ENCODE measurements at regions of chr1 and their contacts with region 1.

Region 1: DNA sequence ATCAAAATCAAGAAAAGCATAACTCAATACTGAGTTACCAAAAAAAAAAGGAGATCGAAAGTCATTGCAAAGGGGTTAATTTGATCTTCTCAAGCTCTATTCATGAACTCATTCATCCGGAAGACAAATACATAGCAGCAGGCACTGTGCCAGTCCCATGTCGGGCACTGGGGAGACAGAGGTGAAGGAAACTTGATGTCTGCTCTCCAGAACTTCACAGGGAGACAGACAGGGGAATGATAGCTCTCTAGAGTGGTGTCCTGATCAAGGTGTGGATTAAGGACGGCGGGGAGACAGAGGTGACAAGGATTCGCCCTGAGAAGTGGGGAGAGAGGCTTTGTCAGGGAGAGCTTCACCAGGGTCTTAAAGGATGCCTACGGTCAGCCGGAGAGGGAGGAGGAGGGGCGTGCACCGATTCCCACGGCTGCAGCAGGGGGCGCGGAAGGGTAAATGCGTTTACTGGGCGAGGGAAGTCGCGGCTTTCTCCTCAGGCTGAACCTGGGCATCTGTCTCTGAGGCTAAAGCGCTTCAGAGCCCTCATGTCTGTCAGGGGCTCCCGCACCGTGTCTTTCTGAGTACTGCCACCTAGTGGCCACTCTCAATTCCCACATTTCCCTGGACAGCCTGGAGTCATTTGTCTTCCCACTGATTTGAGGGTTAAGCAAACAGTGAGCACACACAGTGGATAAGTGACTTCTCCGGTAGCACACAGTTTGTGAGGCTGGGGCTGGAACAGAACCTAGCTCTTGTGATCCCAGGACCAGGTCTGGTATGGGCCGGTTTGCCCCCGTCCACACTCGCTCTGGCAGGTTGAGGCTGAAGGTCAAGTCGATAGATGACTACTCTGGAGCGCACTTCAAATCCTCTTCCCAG is 152.8 kb downstream of the TENT5C start:
- DNase-seq: peak; percentile 60 to 87 (median 71)
- ATAC-seq: peak; percentile 92
- H3K4me3 ChIP-seq: no peak overlapping the region
- H3K4me1 ChIP-seq: peaks cover 3% of the 10 kb centered on the region
- CTCF ChIP-seq: peak; percentile 80

Region 2: GRCh38 chr1:117512743-117513321 is 245.8 kb before region 1 on chr1:
- intact Hi-C with region 1: loop called in 1 of 2 experiments (anchors 5 kb)
- DNase-seq: no peak
- ATAC-seq: peak; percentile 40
- H3K4me3 ChIP-seq: no peak overlapping the region
- H3K4me1 ChIP-seq: no peaks in the 10 kb centered on the region
- CTCF ChIP-seq: no peak

Region 3: GRCh38 chr1:117534995-117535467 is 223.6 kb before region 1 on chr1:
- intact Hi-C with region 1: loop called (anchors 5 to 10 kb)
- DNase-seq: peak in 2 of 3 donors; percentile 44 to 49
- ATAC-seq: peak; percentile 83
- H3K4me3 ChIP-seq: no peak overlapping the region
- H3K4me1 ChIP-seq: no peaks in the 10 kb centered on the region
- CTCF ChIP-seq: peak; percentile 55

Region 4: DNA sequence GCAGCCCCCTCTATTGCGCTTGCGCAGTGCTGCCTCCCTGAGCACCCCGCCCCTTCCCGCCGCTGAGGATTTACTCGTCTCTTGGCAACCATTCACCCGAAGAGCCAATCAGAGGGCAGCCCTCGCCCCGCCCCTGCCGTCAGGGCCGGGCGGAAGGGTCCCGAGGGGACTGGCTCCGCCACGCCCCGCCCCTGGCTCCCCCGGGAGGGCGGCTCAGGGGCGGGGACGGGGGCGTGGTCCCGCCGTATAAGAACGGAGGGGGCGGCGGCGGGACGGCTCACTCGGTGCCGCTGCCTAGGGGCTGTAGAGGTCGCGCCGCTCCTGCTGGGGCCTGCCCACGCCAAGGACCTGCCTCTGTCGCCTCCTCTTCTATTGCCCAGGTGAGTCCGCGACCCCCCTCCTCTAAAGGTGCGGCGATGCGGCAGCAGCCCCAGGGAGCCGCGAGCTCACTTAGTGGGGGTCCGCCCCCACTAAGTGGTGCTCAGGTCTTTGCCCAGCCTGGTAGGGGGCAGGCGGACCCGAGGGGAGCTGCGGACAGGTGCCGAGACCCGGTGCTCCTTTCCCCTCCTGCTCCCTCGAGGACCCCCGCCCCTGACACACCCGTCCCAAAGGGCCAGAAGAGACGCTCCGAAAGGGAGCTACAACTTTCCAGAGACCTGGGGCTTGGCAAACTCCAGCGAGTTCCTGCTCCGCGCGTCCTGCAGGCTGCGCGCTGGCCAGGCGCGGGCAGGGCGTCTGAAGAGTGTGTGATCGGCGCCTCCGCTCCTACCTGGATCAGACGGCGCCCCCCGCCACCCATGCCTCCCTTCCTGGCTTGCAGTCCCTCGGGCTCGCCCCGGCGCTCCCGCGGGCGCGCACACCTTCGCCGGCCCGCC is 152.7 kb before region 1 on chr1 and contains the start of gene TENT5C:
- intact Hi-C with region 1: loop called (anchors 10 kb)
- DNase-seq: peak; percentile 99
- ATAC-seq: peak; percentile 95
- H3K4me3 ChIP-seq: peak within 1 kb of the TSS; percentile 74
- H3K4me1 ChIP-seq: peaks cover 34% of the 10 kb centered on the region
- CTCF ChIP-seq: no peak
- total RNA-seq, gene TENT5C: 16.5 to 37.4 (median 32.1) TPM

Measured in mucosa of descending colon (tissue), 3 donors.